ENCODE measurements at regions of chr16 and their contacts with region 1.

Region 1: DNA sequence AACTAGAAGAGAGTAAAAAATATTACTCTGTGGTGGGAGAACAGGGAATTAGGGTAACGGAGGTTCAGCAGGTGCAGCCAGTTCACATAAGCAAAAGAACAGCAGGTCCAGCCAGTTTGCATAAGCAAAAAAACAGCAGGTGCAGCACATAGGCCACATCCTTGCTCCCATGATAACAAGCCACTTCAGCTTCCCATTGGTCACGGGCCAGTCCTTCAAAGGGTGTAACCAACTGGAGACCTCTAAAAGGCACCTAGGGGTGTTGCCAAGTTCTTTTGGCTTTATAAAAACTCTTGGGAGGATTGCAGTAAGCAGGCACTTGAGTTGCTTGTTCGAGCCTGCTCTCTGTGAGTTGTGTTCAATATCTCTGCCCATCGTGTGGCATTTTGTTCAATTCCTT is 488.1 kb downstream of the XYLT1 start:
- DNase-seq: no peak
- ATAC-seq: no peak
- H3K4me3 ChIP-seq: no peak overlapping the region
- H3K27ac ChIP-seq: no peak overlapping the region
- H3K4me1 ChIP-seq: no peaks in the 10 kb centered on the region
- H3K27me3 ChIP-seq: no peaks in the 10 kb centered on the region
- CTCF ChIP-seq: no peak
- EP300 ChIP-seq: no peak
- POLR2A ChIP-seq: no peak
- RAD21 ChIP-seq: no peak

Region 2: GRCh38 chr16:16960785-16961184 is 21.8 kb before region 1 on chr16:
- CTCF ChIA-PET with region 1: no interaction called
- POLR2A ChIA-PET with region 1: no interaction called
- RAD21 ChIA-PET with region 1: no interaction called
- SMC1A ChIA-PET with region 1: no interaction called
- in situ Hi-C with region 1: no loop called
- intact Hi-C with region 1: no loop called
- DNase-seq: no peak
- ATAC-seq: no peak
- H3K4me3 ChIP-seq: no peak overlapping the region
- H3K27ac ChIP-seq: no peak overlapping the region
- H3K4me1 ChIP-seq: no peaks in the 10 kb centered on the region
- H3K27me3 ChIP-seq: no peaks in the 10 kb centered on the region; a peak in 1 of 4 replicates
- CTCF ChIP-seq: no peak
- EP300 ChIP-seq: no peak
- POLR2A ChIP-seq: no peak
- RAD21 ChIP-seq: no peak

Region 3: GRCh38 chr16:16992975-16993765 is 10.6 kb after region 1 on chr16:
- CTCF ChIA-PET with region 1: interaction called, 4 read pairs
- POLR2A ChIA-PET with region 1: interaction called, 5 read pairs
- RAD21 ChIA-PET with region 1: no interaction called
- SMC1A ChIA-PET with region 1: interaction called, 15 read pairs
- in situ Hi-C with region 1: no loop called
- intact Hi-C with region 1: no loop called
- DNase-seq: peak; percentile 20
- ATAC-seq: peak; percentile 57
- H3K4me3 ChIP-seq: no peak overlapping the region
- H3K27ac ChIP-seq: no peak overlapping the region
- H3K4me1 ChIP-seq: peaks cover 18% of the 10 kb centered on the region
- H3K27me3 ChIP-seq: no peaks in the 10 kb centered on the region
- CTCF ChIP-seq: no peak
- EP300 ChIP-seq: no peak
- POLR2A ChIP-seq: no peak
- RAD21 ChIP-seq: no peak

Region 4: GRCh38 chr16:18009612-18010011 is 1027.0 kb after region 1 on chr16:
- CTCF ChIA-PET with region 1: no interaction called
- POLR2A ChIA-PET with region 1: no interaction called
- RAD21 ChIA-PET with region 1: no interaction called
- SMC1A ChIA-PET with region 1: no interaction called
- in situ Hi-C with region 1: no loop called
- intact Hi-C with region 1: no loop called
- DNase-seq: no peak
- ATAC-seq: no peak
- H3K4me3 ChIP-seq: no peak overlapping the region
- H3K27ac ChIP-seq: no peak overlapping the region
- H3K4me1 ChIP-seq: no peaks in the 10 kb centered on the region; the same call in 1 of the 2 replicates
- H3K27me3 ChIP-seq: no peaks in the 10 kb centered on the region
- CTCF ChIP-seq: no peak
- EP300 ChIP-seq: no peak
- POLR2A ChIP-seq: no peak
- RAD21 ChIP-seq: no peak